Endothelial cell of umbilical vein (primary cell): ENCODE measurements at regions of chr18 and their contacts with region 1.

Region 1: GRCh38 chr18:55982992-55983391 is 395.0 kb upstream of the TCF4 start:
- DNase-seq: peak; percentile 52
- H3K4me3 ChIP-seq: no peak overlapping the region
- H3K27ac ChIP-seq: peak overlapping the region; percentile 1
- H3K4me1 ChIP-seq: peaks cover 7% of the 10 kb centered on the region
- H3K27me3 ChIP-seq: no peaks in the 10 kb centered on the region
- CTCF ChIP-seq: no peak
- POLR2A ChIP-seq: no peak

Region 2: DNA sequence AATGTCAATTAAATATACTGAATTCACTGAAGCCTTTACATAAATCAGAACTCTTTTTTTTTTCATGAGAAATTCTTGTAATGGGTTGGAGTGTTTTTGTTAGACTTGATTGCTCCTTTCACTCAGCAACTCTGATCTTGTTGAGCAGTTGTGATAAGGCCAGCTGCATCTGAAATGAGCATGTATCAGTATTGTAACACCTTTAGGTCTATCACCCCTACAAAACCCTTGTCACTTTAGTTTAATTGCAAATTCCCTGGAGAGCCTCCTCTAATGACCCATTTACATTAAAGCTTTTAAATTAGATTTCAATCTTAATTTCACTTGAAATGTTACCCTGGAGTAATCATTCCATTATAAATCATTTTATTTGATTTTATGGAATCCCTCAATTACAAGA is 48.2 kb before region 1 on chr18:
- CTCF ChIA-PET with region 1: no interaction called
- POLR2A ChIA-PET with region 1: no interaction called
- dilution Hi-C with region 1: no loop called
- intact Hi-C with region 1: loop called (anchors 5 kb)
- DNase-seq: no peak
- H3K4me3 ChIP-seq: no peak overlapping the region
- H3K27ac ChIP-seq: no peak overlapping the region
- H3K4me1 ChIP-seq: no peaks in the 10 kb centered on the region
- H3K27me3 ChIP-seq: no peaks in the 10 kb centered on the region
- CTCF ChIP-seq: no peak
- POLR2A ChIP-seq: no peak

Region 3: DNA sequence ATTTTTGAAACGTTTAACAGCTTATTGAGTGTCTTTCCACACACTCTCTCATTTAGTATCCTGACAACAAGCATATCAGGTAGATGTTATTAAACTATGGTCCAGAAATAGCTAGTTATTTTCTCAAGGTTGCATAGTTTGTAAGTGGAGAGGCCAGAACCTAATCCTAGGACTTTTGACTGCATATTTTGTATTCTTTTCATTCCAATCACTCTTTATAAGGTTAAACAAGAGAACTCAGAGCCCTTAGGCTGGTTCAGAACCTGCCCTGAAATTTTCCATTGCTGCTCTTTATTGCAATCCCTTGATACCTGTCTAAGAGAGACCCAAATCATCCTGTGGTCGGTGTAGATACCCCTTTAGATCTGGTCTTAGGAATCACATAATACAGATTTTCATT is 22.4 kb before region 1 on chr18:
- CTCF ChIA-PET with region 1: no interaction called
- POLR2A ChIA-PET with region 1: no interaction called
- dilution Hi-C with region 1: no loop called
- intact Hi-C with region 1: no loop called
- DNase-seq: no peak
- H3K4me3 ChIP-seq: no peak overlapping the region
- H3K27ac ChIP-seq: no peak overlapping the region
- H3K4me1 ChIP-seq: no peaks in the 10 kb centered on the region
- H3K27me3 ChIP-seq: no peaks in the 10 kb centered on the region
- CTCF ChIP-seq: no peak
- POLR2A ChIP-seq: no peak